ENCODE measurements at regions of chr2 and their contacts with region 1.

Region 1: GRCh38 chr2:202009019-202009481 is 24.6 kb upstream of the FZD7 start:
- DNase-seq: no peak

Region 2: GRCh38 chr2:201971531-201972228 is 37.4 kb before region 1 on chr2:
- intact Hi-C with region 1: loop called (anchors 2 kb)
- DNase-seq: no peak

Measured in cardiac septum (tissue), 1 donor.